Naive thymus-derived CD4-positive, alpha-beta T cell (primary cell): ENCODE measurements at regions of chr10 and their contacts with region 1.

Region 1: DNA sequence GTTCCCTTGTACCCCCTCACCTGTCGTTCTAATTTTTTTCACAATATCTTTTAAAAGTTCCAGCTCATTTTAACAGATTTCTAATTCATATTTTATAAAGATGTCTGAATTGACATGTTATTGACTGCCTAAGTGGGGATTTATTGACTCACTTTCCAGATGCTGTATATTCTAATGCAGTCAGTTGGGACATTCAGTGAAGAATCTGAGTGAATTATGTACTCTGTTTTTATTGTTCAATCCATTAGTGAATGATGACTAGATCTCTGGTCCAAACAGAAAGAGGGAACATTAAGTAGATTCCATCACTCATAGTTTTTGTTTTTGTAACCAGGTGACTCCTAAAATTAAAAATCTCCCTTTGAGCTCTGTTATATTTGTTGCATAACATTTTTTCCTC is 54.3 kb downstream of the LOXL4 start:
- DNase-seq: no peak
- ATAC-seq: no peak
- H3K4me3 ChIP-seq: no peak overlapping the region
- H3K4me3 Mint-ChIP-seq: no peak overlapping the region
- H3K27ac ChIP-seq: no peak overlapping the region
- H3K27ac Mint-ChIP-seq: peak overlapping the region in 2 of 9 donors; percentile 38 to 41
- H3K4me1 ChIP-seq: no peaks in the 10 kb centered on the region
- H3K4me1 Mint-ChIP-seq: peaks cover 9 to 73% (median 60%) of the 10 kb centered on the region in 7 donors
- H3K27me3 ChIP-seq: no peaks in the 10 kb centered on the region
- H3K27me3 Mint-ChIP-seq: no peaks in the 10 kb centered on the region

Region 2: DNA sequence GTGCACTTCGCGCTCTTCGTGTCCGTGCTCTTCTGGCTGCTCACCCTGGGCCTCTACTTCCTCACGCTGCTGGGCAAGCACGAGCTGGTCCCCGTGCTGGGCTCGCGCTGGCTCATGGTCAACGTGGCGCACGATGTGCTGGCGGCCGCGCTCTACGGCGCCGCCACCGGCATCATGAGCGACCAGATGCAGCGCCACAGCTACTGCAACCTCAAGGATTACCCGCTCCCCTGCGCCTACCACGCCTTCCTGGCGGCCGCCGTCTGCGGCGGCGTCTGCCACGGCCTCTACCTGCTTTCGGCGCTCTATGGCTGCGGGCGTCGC is 499.7 kb before region 1 on chr10:
- CTCF ChIA-PET with region 1: no interaction called
- POLR2A ChIA-PET with region 1: no interaction called
- intact Hi-C with region 1: no loop called
- DNase-seq: peak in 8 of 9 donors; percentile 28 to 67 (median 40)
- ATAC-seq: peak; percentile 83
- H3K4me3 ChIP-seq: peak overlapping the region; percentile 69
- H3K4me3 Mint-ChIP-seq: peak overlapping the region; percentile 95 to 100 (median 99)
- H3K27ac ChIP-seq: no peak overlapping the region
- H3K27ac Mint-ChIP-seq: peak overlapping the region in 7 of 9 donors; percentile 44 to 95 (median 80)
- H3K4me1 ChIP-seq: peaks cover 5 to 6% of the 10 kb centered on the region in 2 donors
- H3K4me1 Mint-ChIP-seq: peaks cover 5 to 21% (median 11%) of the 10 kb centered on the region in 7 donors
- H3K27me3 ChIP-seq: no peaks in the 10 kb centered on the region
- H3K27me3 Mint-ChIP-seq: peaks cover 14 to 43% (median 19%) of the 10 kb centered on the region in 5 donors

Region 3: GRCh38 chr10:98186681-98187080 is 27.1 kb before region 1 on chr10:
- CTCF ChIA-PET with region 1: no interaction called
- POLR2A ChIA-PET with region 1: no interaction called
- intact Hi-C with region 1: loop called in 1 of 2 experiments (anchors 2 kb)
- DNase-seq: no peak
- ATAC-seq: no peak
- H3K4me3 ChIP-seq: no peak overlapping the region
- H3K4me3 Mint-ChIP-seq: no peak overlapping the region
- H3K27ac ChIP-seq: no peak overlapping the region
- H3K27ac Mint-ChIP-seq: peak overlapping the region in 1 of 9 donors; percentile 6
- H3K4me1 ChIP-seq: no peaks in the 10 kb centered on the region
- H3K4me1 Mint-ChIP-seq: peaks cover 16 to 40% (median 32%) of the 10 kb centered on the region in 7 donors
- H3K27me3 ChIP-seq: no peaks in the 10 kb centered on the region
- H3K27me3 Mint-ChIP-seq: no peaks in the 10 kb centered on the region

Region 4: GRCh38 chr10:98201760-98202159 is 12.0 kb before region 1 on chr10:
- CTCF ChIA-PET with region 1: no interaction called
- POLR2A ChIA-PET with region 1: interaction called, 3 read pairs
- intact Hi-C with region 1: loop called in 1 of 2 experiments (anchors 2 kb)
- DNase-seq: no peak
- ATAC-seq: no peak
- H3K4me3 ChIP-seq: no peak overlapping the region
- H3K4me3 Mint-ChIP-seq: no peak overlapping the region
- H3K27ac ChIP-seq: no peak overlapping the region
- H3K27ac Mint-ChIP-seq: no peak overlapping the region
- H3K4me1 ChIP-seq: no peaks in the 10 kb centered on the region
- H3K4me1 Mint-ChIP-seq: peaks cover 0 to 39% (median 23%) of the 10 kb centered on the region in 7 donors
- H3K27me3 ChIP-seq: no peaks in the 10 kb centered on the region
- H3K27me3 Mint-ChIP-seq: no peaks in the 10 kb centered on the region